ENCODE measurements at regions of chr17 and their contacts with region 1.

Region 1: DNA sequence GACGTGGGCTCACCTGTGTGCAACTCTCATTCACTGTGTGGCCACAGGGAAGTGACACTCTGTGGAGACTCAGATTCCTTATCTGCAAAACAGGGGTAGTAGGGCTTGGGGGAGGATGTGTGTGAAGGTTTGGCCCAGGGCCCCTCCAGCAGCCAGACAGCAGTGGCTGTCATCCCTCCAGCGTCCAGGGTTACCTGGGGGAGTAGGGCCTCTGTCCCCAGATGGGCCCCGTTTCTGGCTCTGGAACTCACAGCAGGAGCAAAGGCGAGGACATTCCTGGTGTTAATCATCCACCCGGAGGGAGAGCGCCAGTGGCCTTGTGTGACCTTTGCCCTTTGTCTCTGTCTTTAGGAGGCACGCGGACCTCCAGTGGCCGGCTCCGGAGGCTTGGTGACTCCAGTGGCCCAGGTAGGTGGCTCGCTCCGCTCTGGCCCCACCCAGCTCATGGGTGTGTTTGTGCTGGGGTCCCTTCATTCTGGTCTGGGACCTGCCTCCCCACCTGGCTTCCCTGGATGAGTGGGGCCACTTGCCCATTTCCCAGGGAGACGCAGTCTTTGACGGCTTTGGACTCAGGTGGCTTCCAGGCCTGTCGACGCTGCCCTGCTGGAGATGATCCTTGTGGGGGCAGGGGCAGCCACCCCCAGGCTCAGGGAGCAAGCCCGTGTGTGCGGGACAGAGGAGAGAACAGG is 166.2 kb downstream of the SEC14L1 start:
- DNase-seq: no peak
- ATAC-seq: no peak
- H3K4me3 ChIP-seq: no peak overlapping the region
- H3K4me3 Mint-ChIP-seq: no peak overlapping the region
- H3K27ac ChIP-seq: no peak overlapping the region
- H3K27ac Mint-ChIP-seq: no peak overlapping the region
- H3K4me1 ChIP-seq: peaks cover 26% of the 10 kb centered on the region
- H3K4me1 Mint-ChIP-seq: peaks cover 3 to 10% of the 10 kb centered on the region in 2 donors
- H3K27me3 ChIP-seq: no peaks in the 10 kb centered on the region
- H3K27me3 Mint-ChIP-seq: peaks cover 0 to 2% of the 10 kb centered on the region in 2 donors
- CTCF ChIP-seq: no peak

Region 2: GRCh38 chr17:77291591-77292386 is 15.1 kb before region 1 on chr17:
- intact Hi-C with region 1: loop called (anchors 1 kb)
- DNase-seq: no peak
- ATAC-seq: no peak
- H3K4me3 ChIP-seq: no peak overlapping the region
- H3K4me3 Mint-ChIP-seq: no peak overlapping the region
- H3K27ac ChIP-seq: no peak overlapping the region
- H3K27ac Mint-ChIP-seq: no peak overlapping the region
- H3K4me1 ChIP-seq: no peaks in the 10 kb centered on the region
- H3K4me1 Mint-ChIP-seq: no peaks in the 10 kb centered on the region
- H3K27me3 ChIP-seq: no peaks in the 10 kb centered on the region
- H3K27me3 Mint-ChIP-seq: peaks cover 0 to 3% of the 10 kb centered on the region in 2 donors
- CTCF ChIP-seq: no peak

Region 3: DNA sequence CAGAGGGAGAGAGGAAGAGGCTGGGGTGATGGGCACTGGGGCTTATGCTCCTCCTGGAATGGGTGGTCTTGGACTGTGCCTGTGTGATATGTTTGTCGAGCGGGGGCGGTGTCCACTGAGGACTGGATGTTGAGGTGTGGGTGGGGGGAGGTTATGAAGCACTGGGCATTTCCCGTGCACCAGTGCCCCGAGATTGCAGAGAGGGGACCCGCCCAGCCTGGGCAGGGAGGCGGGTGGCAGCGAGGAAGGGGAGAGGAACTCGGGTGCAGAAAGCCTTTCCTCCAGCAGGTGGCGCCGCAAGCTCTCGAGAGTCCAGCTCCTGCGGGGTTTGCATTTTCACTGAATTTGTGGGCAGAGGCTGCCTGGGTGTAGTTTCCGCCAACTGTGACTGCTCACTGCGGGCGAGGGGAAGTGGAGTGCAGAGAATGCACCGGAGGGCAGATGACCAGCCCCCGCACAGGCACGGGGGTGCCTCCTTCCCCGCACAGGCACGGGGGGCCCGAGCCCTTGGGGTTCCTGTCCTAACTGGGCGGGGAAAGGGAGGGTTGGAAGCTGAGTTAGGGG is 24.4 kb after region 1 on chr17:
- intact Hi-C with region 1: no loop called
- DNase-seq: peak; percentile 93 to 97
- ATAC-seq: peak; percentile 88 to 95 (median 93)
- H3K4me3 ChIP-seq: peak overlapping the region; percentile 26
- H3K4me3 Mint-ChIP-seq: peak overlapping the region; percentile 82
- H3K27ac ChIP-seq: peak overlapping the region; percentile 68
- H3K27ac Mint-ChIP-seq: peak overlapping the region; percentile 83 to 96
- H3K4me1 ChIP-seq: peaks cover 60% of the 10 kb centered on the region
- H3K4me1 Mint-ChIP-seq: peaks cover 29 to 37% of the 10 kb centered on the region in 2 donors
- H3K27me3 ChIP-seq: no peaks in the 10 kb centered on the region
- H3K27me3 Mint-ChIP-seq: no peaks in the 10 kb centered on the region
- CTCF ChIP-seq: peak; percentile 88